ENCODE measurements at regions of chr14 and their contacts with region 1.

Region 1: GRCh38 chr14:104582660-104583059 is 3.1 kb downstream of the C14orf180 start:
- DNase-seq: no peak
- H3K4me3 ChIP-seq: no peak overlapping the region
- H3K27ac ChIP-seq: no peak overlapping the region
- H3K4me1 ChIP-seq: no peaks in the 10 kb centered on the region
- H3K27me3 ChIP-seq: no peaks in the 10 kb centered on the region
- CTCF ChIP-seq: no peak
- EP300 ChIP-seq: no peak
- POLR2A ChIP-seq: no peak
- RAD21 ChIP-seq: no peak

Region 2: DNA sequence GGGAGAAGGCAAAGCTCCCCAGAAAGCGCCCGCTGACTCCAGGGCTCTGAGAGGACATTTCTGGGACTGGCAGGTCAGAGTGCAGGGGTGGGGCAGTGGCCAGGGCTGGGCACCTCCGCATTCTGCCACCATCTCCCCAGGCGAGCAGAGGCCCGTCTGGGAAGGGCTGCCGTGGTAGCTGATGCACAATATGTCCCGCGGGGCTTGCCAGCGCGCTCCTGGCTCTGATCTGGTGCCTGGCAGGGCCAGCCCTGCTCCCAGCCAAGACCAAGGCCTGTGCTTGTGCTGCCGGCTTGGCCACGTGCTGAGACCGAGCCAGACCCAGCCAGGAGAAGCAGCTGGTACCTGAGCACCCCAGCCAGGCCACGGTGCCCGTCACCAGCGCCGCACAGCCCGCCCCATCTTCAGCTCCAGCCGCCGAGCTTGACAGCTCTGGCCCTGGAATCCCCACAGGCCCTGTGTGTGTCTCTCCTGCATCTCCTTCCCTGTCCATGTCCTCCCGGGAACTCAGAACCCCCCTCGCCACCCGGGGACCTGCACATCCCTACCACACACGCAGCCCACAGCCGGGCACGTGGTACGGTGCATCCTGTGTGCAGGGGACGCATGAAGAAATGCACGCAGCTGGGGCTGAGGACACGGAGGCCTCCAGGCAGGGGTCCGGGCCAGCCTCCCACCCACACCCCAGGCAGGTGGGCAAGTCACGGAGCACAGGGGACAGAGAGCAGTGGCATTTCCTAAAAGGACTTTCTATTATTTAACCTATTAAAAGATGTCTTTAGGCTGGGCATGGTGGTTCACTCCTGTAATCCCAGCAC is 71.7 kb before region 1 on chr14:
- CTCF ChIA-PET with region 1: no interaction called
- POLR2A ChIA-PET with region 1: no interaction called
- DNase-seq: peak in 1 of 2 experiments; percentile 42
- H3K4me3 ChIP-seq: no peak overlapping the region
- H3K27ac ChIP-seq: no peak overlapping the region
- H3K4me1 ChIP-seq: no peaks in the 10 kb centered on the region; a peak in 1 of 7 replicates
- H3K27me3 ChIP-seq: no peaks in the 10 kb centered on the region
- CTCF ChIP-seq: no peak
- EP300 ChIP-seq: no peak
- POLR2A ChIP-seq: no peak
- RAD21 ChIP-seq: no peak

Region 3: DNA sequence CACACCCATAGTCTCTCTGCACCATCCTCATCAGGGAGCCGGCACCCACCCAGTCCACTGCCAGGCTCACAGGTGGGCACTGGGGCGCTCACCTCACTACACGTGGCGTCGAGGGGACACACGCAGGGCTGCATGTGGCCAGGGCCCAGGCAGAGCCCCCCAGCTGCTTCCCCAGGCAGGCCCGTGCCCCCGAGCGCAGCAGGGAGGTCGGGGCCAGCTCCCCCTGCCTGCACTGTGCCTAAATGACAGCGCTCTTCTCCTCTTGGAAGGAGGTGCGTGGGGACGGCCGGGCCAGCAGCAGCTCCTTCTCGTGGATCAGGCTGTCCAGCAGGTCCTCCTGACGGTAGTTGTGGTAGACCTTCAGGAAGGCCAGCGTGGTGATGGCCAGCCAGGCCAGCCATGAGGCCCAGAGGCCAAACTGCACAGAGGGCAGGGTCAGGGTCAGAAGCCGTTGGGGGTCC is 10.6 kb after region 1 on chr14:
- CTCF ChIA-PET with region 1: interaction called, 11 read pairs
- POLR2A ChIA-PET with region 1: no interaction called
- DNase-seq: no peak
- H3K4me3 ChIP-seq: no peak overlapping the region
- H3K27ac ChIP-seq: no peak overlapping the region
- H3K4me1 ChIP-seq: no peaks in the 10 kb centered on the region
- H3K27me3 ChIP-seq: no peaks in the 10 kb centered on the region
- CTCF ChIP-seq: peak in 2 of 3 experiments; percentile 16 to 36; a peak in 2 of 4 replicates
- EP300 ChIP-seq: no peak
- POLR2A ChIP-seq: no peak
- RAD21 ChIP-seq: peak in 1 of 2 experiments; percentile 5; a peak in 1 of 4 replicates

Measured in H1 (cell line).